Ovary (tissue), 10 donors: ENCODE measurements at regions of chr12 and their contacts with region 1.

Region 1: DNA sequence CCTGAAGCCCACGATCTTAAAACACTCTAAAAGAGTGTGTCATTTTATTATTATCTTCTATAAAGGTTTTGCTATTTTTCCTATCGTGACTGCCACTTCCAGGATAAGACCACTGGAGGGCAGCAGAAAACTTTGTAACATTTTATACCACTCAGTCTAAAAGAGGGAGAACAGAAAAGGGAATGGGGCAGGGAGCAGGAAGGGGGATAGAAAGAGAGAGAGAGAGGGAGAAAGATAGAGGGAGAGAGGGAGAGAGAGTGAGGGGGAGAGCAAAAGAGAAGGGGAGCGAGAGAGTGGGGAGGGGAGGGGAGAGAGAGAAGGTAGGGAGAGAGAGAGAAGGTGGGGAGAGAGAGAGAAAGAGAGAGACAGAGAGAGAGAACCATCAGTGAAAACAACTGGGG is 2.0 kb upstream of the ART4 start:
- DNase-seq: peak in 4 of 5 donors; percentile 34 to 73 (median 44)
- H3K4me3 ChIP-seq: no peak overlapping the region
- H3K27ac ChIP-seq: no peak overlapping the region
- H3K4me1 ChIP-seq: peaks cover 4% of the 10 kb centered on the region
- H3K27me3 ChIP-seq: no peaks in the 10 kb centered on the region
- CTCF ChIP-seq: peak; percentile 31 to 86 (median 82)
- EP300 ChIP-seq: no peak
- POLR2A ChIP-seq: no peak

Region 2: DNA sequence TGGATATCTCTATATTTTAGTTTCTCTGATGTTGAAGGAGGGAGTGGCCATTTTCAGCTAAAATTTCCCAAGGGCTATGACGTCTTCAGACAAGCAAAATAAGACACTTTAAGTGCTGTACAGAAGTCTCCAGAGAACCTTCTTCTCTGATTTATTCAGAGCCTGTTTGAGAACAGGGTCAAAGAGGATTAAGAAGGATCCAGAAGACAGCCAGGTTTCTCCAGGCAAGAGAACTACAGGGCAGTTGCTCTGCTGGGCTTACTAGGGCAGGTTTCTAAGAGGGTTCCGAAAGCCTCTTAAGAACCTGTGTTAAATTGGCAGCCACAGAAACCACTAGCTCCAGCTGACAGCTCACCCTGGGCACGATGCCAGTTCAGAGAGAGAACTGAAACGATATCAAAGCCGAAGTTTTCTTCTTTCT is 39.1 kb after region 1 on chr12:
- intact Hi-C with region 1: loop called in 1 of 4 experiments (anchors 5 kb)
- DNase-seq: peak; percentile 81 to 93 (median 88)
- H3K4me3 ChIP-seq: peak overlapping the region; percentile 37
- H3K27ac ChIP-seq: peak overlapping the region; percentile 26 to 74
- H3K4me1 ChIP-seq: peaks cover 10% of the 10 kb centered on the region
- H3K27me3 ChIP-seq: no peaks in the 10 kb centered on the region
- CTCF ChIP-seq: no peak
- EP300 ChIP-seq: no peak
- POLR2A ChIP-seq: no peak

Region 3: DNA sequence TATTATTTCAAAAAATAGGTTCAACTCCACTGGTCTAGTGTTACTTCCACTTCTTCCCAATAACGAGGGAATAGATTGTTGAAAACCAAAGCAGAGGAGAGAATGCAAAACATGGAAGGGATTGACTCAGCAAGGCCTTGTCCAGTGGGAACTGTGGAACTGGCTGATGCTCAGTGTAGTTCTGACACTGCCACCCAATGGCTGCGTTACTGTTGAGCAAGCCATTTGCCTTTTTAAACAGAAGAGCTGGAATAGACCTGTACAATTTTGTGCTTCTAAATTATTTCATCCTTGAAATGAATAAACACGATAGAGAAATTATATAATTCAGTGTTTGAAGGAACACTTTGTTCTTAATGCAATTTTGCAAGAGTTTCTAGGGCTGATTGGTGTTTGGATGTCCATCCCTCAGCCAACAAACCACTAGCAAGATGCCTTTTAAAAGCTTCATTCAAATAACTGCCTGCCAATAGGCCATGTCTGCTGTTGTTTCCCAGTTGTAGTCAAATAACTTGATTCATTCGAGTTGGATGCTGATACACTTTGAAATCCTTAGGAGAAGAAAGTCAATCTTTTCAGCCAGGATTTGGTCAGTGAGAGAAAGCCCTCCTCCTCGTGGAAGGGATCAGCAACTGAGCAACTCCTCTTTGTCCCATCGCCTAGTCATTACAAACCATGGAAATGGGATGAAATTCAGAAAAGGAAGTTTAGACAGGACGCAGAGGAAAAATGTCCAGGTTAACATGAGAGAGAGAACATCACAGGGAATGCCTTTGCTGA is 47.6 kb after region 1 on chr12:
- intact Hi-C with region 1: loop called in 3 of 4 experiments (anchors 2 to 10 kb)
- DNase-seq: peak; percentile 56 to 85 (median 74)
- H3K4me3 ChIP-seq: no peak overlapping the region
- H3K27ac ChIP-seq: peak overlapping the region; percentile 31 to 74
- H3K4me1 ChIP-seq: peaks cover 9% of the 10 kb centered on the region
- H3K27me3 ChIP-seq: no peaks in the 10 kb centered on the region
- CTCF ChIP-seq: peak in 2 of 3 donors; percentile 29 to 34
- EP300 ChIP-seq: no peak
- POLR2A ChIP-seq: no peak

Region 4: GRCh38 chr12:14995583-14996425 is 150.5 kb after region 1 on chr12:
- intact Hi-C with region 1: loop called (anchors 2 to 5 kb)
- DNase-seq: no peak
- H3K4me3 ChIP-seq: no peak overlapping the region
- H3K27ac ChIP-seq: no peak overlapping the region
- H3K4me1 ChIP-seq: peaks cover 1% of the 10 kb centered on the region
- H3K27me3 ChIP-seq: no peaks in the 10 kb centered on the region
- CTCF ChIP-seq: peak in 1 of 3 donors; percentile 36
- EP300 ChIP-seq: no peak
- POLR2A ChIP-seq: no peak

Region 5: GRCh38 chr12:15179672-15180071 is 334.3 kb after region 1 on chr12:
- intact Hi-C with region 1: no loop called
- DNase-seq: peak in 1 of 5 donors; percentile 70
- H3K4me3 ChIP-seq: no peak overlapping the region
- H3K27ac ChIP-seq: no peak overlapping the region
- H3K4me1 ChIP-seq: peaks cover 3% of the 10 kb centered on the region
- H3K27me3 ChIP-seq: no peaks in the 10 kb centered on the region
- CTCF ChIP-seq: no peak
- EP300 ChIP-seq: no peak
- POLR2A ChIP-seq: no peak

Region 6: GRCh38 chr12:15220994-15221885 is 375.9 kb after region 1 on chr12 and contains the start of gene RERG:
- intact Hi-C with region 1: loop called in 1 of 4 experiments (anchors 2 kb)
- DNase-seq: peak; percentile 85 to 93 (median 90)
- H3K4me3 ChIP-seq: peak within 1 kb of the TSS; percentile 62
- H3K27ac ChIP-seq: peak within 1 kb of the TSS; percentile 45 to 53
- H3K4me1 ChIP-seq: no peaks in the 10 kb centered on the region
- H3K27me3 ChIP-seq: no peaks in the 10 kb centered on the region
- CTCF ChIP-seq: peak; percentile 98 to 99 (median 99)
- EP300 ChIP-seq: no peak
- POLR2A ChIP-seq: peak; percentile 65
- total RNA-seq, gene RERG: 12.9 to 87.2 (median 36.7) TPM

Region 7: DNA sequence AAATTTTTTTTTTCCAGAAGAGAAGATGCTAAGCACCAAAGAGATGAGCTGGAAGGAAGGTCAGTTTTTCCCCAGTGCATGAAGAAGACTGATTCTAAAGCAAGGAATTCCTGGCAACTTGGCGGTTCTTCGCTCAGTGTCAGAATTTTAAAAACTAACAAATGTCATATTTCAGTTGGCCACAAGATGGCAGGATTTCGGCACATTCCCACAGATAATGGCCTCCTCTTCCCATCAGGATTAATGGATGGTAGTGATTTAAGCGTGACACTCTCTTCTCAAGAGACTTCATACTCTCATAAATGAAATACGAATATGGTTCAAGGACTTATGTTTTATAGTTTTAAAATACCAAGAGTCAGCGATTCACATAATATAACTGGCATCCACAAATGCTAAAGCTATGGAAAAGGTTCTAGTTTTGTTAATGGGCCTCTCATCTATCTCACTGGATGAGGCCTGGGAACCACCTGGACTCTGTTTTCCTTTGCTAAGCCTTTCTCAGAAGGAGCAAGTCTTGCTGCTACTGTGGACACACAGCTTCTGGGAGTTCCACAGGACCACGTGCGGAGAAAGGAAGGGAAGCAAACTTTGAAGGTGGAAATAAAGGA is 430.8 kb after region 1 on chr12:
- intact Hi-C with region 1: loop called in 2 of 4 experiments (anchors 10 kb)
- DNase-seq: peak in 1 of 5 donors; percentile 33
- H3K4me3 ChIP-seq: no peak overlapping the region
- H3K27ac ChIP-seq: no peak overlapping the region
- H3K4me1 ChIP-seq: no peaks in the 10 kb centered on the region
- H3K27me3 ChIP-seq: no peaks in the 10 kb centered on the region
- CTCF ChIP-seq: peak; percentile 44 to 64 (median 59)
- EP300 ChIP-seq: no peak
- POLR2A ChIP-seq: no peak